ENCODE measurements at regions of chr4 and their contacts with region 1.

Region 1: DNA sequence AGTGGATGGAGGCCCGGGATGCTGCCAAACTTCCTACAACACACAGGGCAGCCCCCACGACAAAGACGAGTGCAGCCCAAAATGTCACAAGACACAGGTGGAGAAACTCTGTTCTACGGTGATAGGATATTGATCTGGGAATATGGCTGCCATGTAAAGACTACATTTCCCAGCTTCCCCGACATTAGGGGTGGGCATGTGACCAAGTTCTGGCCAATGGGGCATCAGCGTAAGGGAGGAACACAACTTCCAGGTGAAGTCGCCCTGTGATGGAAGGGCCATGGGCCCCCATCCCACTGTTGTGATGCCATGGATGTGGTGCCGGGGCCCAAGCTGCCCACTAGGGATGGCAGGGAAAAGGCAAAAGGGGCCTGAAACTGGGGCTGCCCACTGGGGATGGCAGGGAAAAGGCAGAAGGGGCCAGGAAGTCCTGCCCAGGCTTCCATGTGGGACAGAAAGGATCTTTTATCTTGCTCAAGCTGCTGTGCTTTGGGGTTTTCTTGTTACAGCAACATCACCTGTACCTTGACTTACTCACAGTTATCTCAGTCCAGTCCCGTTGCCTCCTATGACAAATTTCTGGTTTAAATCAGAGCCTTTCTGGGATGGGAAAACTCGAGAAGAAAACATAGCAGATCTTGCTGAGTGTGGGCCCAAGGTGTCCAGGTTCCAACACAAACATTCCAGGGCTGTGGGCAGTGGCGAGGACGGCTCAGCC is 9.7 kb upstream of the ADRA2C start:
- DNase-seq: no peak
- ATAC-seq: no peak
- H3K4me3 ChIP-seq: no peak overlapping the region
- H3K27ac ChIP-seq: no peak overlapping the region
- H3K4me1 ChIP-seq: no peaks in the 10 kb centered on the region
- H3K27me3 ChIP-seq: no peaks in the 10 kb centered on the region
- CTCF ChIP-seq: no peak

Region 2: DNA sequence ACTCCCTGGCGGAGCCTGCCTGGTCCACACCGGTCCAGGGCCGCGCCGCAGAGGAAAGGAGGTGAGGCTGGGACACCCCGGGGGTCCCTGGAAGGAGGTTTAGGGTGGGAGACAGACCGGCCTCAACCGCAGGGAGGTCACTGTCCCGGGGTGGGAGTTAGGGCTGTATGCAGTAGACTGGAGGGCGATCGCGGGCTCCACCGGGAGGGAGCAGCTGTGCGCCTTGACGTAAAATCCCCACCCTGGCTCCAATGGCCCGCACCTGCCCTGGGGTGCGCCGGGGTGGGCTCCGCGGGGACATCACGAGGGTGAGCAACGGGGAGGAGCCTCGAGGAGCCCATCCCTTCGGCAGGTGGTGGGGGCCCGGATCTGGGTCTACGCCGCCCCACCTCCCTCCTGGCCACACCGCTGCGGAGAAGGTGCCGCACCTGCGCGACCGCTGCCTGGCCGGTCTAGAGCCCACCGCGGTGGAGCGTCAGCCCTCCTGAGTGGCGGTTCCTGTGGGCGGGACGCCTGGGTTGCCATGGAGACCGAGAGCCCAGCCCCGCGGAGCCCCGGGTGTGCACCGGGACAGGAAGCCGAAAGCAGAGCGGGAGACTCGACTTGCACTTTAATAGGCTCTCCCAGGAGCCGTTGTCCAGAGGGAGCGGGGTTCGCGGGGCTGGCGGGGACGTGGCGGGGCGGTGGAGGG is 114.8 kb after region 1 on chr4:
- intact Hi-C with region 1: loop called in 1 of 3 experiments (anchors 10 kb)
- DNase-seq: peak in 5 of 6 donors; percentile 14 to 70 (median 36)
- ATAC-seq: peak in 3 of 4 donors; percentile 38 to 53 (median 39)
- H3K4me3 ChIP-seq: peak overlapping the region in 1 of 4 donors; percentile 10
- H3K27ac ChIP-seq: no peak overlapping the region
- H3K4me1 ChIP-seq: no peaks in the 10 kb centered on the region
- H3K27me3 ChIP-seq: peaks cover 0 to 8% (median 0%) of the 10 kb centered on the region in 4 donors
- CTCF ChIP-seq: no peak

Measured in pancreas (tissue), 10 donors.